ENCODE measurements at regions of chrX and their contacts with region 1.

Region 1: GRCh38 chrX:154986826-154987576 is 35.5 kb downstream of the F8 start:
- DNase-seq: peak in 1 of 9 experiments; percentile 16
- ATAC-seq: no peak
- H3K4me3 ChIP-seq: no peak overlapping the region
- H3K4me3 Mint-ChIP-seq: no peak overlapping the region
- H3K27ac ChIP-seq: no peak overlapping the region
- H3K27ac Mint-ChIP-seq: no peak overlapping the region
- H3K4me1 ChIP-seq: no peaks in the 10 kb centered on the region
- H3K4me1 Mint-ChIP-seq: no peaks in the 10 kb centered on the region
- H3K27me3 ChIP-seq: no peaks in the 10 kb centered on the region
- H3K27me3 Mint-ChIP-seq: no peaks in the 10 kb centered on the region
- CTCF ChIP-seq: no peak

Region 2: DNA sequence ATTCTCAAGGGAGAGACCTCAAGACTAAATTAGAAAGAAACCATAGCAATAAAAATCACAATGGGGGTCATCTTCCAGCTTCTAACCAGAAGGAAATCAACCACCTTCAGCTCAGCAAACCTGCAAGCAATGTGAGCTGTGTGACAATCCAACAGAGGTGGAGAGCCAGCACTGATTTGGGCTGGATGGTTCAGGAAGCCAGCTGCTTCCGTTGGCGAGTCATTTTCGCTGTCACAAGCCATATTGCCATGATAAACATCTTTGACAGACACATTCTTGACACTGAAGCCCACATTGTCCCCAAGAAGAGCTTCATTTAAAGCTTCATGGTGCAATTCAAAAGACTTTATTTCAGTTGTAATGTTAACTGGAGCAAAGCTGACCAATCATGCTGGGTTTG is 78.2 kb before region 1 on chrX:
- CTCF ChIA-PET with region 1: no interaction called
- POLR2A ChIA-PET with region 1: no interaction called
- intact Hi-C with region 1: no loop called
- DNase-seq: no peak
- ATAC-seq: no peak
- H3K4me3 ChIP-seq: no peak overlapping the region
- H3K4me3 Mint-ChIP-seq: no peak overlapping the region
- H3K27ac ChIP-seq: no peak overlapping the region
- H3K27ac Mint-ChIP-seq: no peak overlapping the region
- H3K4me1 ChIP-seq: no peaks in the 10 kb centered on the region
- H3K4me1 Mint-ChIP-seq: no peaks in the 10 kb centered on the region
- H3K27me3 ChIP-seq: no peaks in the 10 kb centered on the region
- H3K27me3 Mint-ChIP-seq: no peaks in the 10 kb centered on the region
- CTCF ChIP-seq: no peak

Region 3: DNA sequence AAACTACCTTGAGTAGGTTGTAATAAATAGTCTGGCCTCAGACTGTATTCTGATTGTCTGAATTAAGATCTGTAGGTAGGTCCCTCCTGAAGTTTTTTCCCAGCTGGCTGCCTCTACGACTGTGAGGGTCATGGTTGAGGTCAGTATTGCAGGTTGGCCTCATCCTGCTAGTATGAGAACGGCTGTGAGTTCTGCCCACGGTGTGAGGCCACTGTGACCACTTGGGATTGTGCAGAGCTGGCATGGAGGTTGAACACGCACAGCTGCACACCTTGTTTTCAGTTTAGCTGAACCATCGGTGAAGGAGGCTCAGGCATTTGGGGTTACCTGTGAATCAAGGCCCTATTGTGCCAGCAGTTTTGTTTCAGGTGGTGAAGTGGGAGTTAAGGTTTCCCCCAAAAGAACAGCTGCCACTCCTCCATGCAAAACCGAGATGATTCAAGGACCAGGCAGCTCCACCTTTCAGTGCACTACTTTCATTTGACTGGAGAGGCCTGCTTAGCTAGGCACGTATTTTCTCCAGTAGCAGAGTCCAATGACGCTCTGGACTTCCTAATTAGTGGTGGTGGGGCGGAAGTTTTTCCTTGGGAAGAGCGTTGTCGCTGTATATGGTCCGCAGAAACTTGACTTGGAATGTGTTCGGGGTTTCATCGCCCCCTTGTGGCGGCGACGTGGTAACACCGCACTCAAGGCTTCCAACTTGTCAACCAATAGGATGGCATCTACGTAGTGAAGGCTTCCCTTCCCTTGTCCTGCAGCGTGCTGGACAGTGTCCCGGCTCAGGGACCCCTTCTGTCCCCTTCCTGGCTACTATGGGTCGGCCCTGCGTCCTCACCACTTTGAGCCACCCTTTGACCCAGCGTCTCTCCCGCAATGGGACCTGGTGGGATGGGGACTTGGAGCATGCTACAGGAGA is 70.1 kb after region 1 on chrX:
- CTCF ChIA-PET with region 1: interaction called, 25 read pairs
- POLR2A ChIA-PET with region 1: no interaction called
- intact Hi-C with region 1: no loop called
- DNase-seq: peak; percentile 4 to 75 (median 40)
- ATAC-seq: peak; percentile 86
- H3K4me3 ChIP-seq: peak overlapping the region; percentile 20 to 31
- H3K4me3 Mint-ChIP-seq: peak overlapping the region; percentile 74
- H3K27ac ChIP-seq: peak overlapping the region in 1 of 2 experiments; percentile 36
- H3K27ac Mint-ChIP-seq: peak overlapping the region; percentile 62
- H3K4me1 ChIP-seq: peaks cover 12% of the 10 kb centered on the region
- H3K4me1 Mint-ChIP-seq: peaks cover 16% of the 10 kb centered on the region
- H3K27me3 ChIP-seq: no peaks in the 10 kb centered on the region
- H3K27me3 Mint-ChIP-seq: no peaks in the 10 kb centered on the region
- CTCF ChIP-seq: peak; percentile 64

Measured in CD8-positive, alpha-beta T cell (primary cell).